T-cell (primary cell): ENCODE measurements at regions of chr16 and their contacts with region 1.

Region 1: DNA sequence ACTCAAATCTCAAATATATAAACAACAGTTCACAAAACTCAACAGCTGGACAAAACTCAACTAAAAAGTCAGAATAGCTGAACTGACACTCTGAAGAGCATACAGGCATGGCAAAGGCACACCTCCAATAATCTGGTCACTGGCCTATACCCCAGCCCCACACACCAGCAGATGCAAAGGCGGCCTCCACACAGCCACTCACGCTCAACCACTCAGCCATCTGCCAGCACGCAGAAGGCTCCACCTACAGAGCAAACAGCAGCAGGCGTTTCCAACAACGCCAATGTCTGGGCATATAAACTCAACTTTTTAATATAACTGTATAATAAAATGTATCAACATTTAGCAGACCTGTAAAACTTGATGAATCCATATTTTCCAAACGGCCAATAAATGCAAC is 17.2 kb downstream of the USP7 start:
- DNase-seq: no peak
- ATAC-seq: no peak
- H3K4me3 ChIP-seq: no peak overlapping the region
- H3K4me3 Mint-ChIP-seq: peak overlapping the region in 1 of 3 donors; percentile 65
- H3K27ac ChIP-seq: no peak overlapping the region
- H3K27ac Mint-ChIP-seq: peak overlapping the region in 1 of 2 donors; percentile 12
- H3K4me1 ChIP-seq: peaks cover 43 to 91% of the 10 kb centered on the region in 2 experiments
- H3K4me1 Mint-ChIP-seq: peaks cover 94 to 98% (median 95%) of the 10 kb centered on the region in 3 donors
- H3K27me3 ChIP-seq: no peaks in the 10 kb centered on the region
- H3K27me3 Mint-ChIP-seq: no peaks in the 10 kb centered on the region

Region 2: GRCh38 chr16:8936421-8936820 is 10.1 kb before region 1 on chr16:
- CTCF ChIA-PET with region 1: interaction called, 4 to 38 read pairs
- POLR2A ChIA-PET with region 1: interaction called in 1 of 2 experiments, 4 read pairs
- DNase-seq: peak; percentile 36 to 77 (median 66)
- ATAC-seq: peak; percentile 95 to 98 (median 96)
- H3K4me3 ChIP-seq: no peak overlapping the region
- H3K4me3 Mint-ChIP-seq: peak overlapping the region in 2 of 3 donors; percentile 24 to 48
- H3K27ac ChIP-seq: no peak overlapping the region
- H3K27ac Mint-ChIP-seq: peak overlapping the region in 1 of 2 donors; percentile 50
- H3K4me1 ChIP-seq: peaks cover 22 to 56% of the 10 kb centered on the region in 2 experiments
- H3K4me1 Mint-ChIP-seq: peaks cover 81 to 95% (median 93%) of the 10 kb centered on the region in 3 donors
- H3K27me3 ChIP-seq: no peaks in the 10 kb centered on the region
- H3K27me3 Mint-ChIP-seq: no peaks in the 10 kb centered on the region

Region 3: DNA sequence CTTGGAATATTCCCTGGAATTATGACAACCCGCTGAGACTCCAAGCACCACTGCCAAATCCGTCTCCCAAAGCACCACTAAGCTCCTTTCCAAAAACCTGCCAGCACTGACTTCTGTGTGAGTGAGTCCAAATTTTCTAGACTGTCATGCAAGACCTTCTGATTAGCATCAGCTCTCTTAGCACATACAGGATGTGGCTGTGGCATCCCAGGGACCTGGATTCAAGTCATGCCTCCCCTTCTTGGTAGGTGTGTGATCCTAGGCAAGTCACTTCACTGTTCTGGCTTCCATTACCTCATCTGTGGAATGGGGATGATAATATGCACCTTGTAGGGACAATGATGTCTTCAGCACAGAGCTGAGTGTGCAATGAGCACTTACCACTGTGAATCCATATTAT is 55.5 kb after region 1 on chr16:
- CTCF ChIA-PET with region 1: no interaction called
- POLR2A ChIA-PET with region 1: interaction called in 1 of 2 experiments, 10 read pairs
- DNase-seq: no peak
- ATAC-seq: no peak
- H3K4me3 ChIP-seq: no peak overlapping the region
- H3K4me3 Mint-ChIP-seq: no peak overlapping the region
- H3K27ac ChIP-seq: no peak overlapping the region
- H3K27ac Mint-ChIP-seq: no peak overlapping the region
- H3K4me1 ChIP-seq: no peaks in the 10 kb centered on the region
- H3K4me1 Mint-ChIP-seq: no peaks in the 10 kb centered on the region
- H3K27me3 ChIP-seq: peaks cover 0 to 3% of the 10 kb centered on the region in 2 experiments
- H3K27me3 Mint-ChIP-seq: peaks cover under 1 to 2% of the 10 kb centered on the region in 2 donors